Activated T-helper 1 cell treated with anti-CD3 and anti-CD28 coated beads, Interleukin-12 subunit alpha, Interleukin-12 subunit beta, Interleukin-2, Interleukin-4 antibody, amounts not matched to agents 30 ng/mL and 10 ng/mL and 1 ng/mL, durations not matched to agents 14 hours and 24 hours and 36 hours (primary cell): ENCODE measurements at regions of chr6 and their contacts with region 1.

Region 1: GRCh38 chr6:45922728-45923351 is 92.8 kb downstream of the CLIC5 start:
- DNase-seq: peak; percentile 55
- H3K4me3 Mint-ChIP-seq: peak overlapping the region; percentile 43
- H3K27ac Mint-ChIP-seq: peak overlapping the region; percentile 82
- H3K4me1 Mint-ChIP-seq: peaks cover 57% of the 10 kb centered on the region
- H3K27me3 Mint-ChIP-seq: peaks cover 4% of the 10 kb centered on the region

Region 2: DNA sequence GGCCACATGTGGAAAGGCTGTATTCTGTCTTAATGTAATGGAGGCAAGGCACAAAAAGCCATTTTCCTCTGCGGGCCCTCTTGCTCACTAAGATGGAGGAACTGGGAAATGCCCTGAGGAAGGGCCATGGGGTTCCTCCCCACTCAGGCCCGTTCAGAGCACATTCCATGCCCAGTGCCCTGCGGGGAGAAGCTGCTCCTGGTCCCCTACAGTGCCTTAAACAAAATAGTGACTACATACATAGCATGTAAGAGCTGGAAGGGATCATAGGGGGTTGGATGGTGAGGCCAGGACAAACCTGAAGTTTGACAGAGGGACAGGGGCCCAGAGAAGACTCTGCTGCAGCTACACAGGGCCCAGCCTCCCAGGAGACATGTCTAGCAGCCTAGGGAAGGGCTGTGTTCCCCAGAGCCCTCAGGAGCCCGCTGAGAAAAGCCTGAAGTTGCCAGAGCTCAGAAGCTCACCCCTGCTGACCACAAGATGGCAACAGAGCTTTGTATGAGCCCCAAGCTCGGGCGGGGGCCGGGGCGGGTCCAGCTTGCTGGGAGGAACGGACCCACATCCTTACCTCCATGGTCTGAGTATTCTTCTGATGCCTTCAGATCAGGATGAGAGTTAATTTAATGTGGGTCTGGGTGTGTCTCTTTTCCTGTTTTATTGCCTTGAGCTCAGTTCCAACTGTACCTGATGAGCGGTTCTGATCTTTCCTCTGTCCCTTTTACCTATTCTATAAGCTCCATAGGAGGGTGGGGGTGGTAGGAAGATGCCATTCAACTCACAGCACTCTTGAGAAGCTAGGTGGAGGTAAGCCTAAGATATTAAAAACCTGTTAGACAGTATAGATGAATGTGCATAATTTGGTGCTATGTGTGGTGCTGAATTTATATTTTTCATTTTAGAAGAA is 1292.5 kb before region 1 on chr6:
- intact Hi-C with region 1: loop called (anchors 1 kb)
- DNase-seq: no peak
- H3K4me3 Mint-ChIP-seq: no peak overlapping the region
- H3K27ac Mint-ChIP-seq: no peak overlapping the region
- H3K4me1 Mint-ChIP-seq: peaks cover 9% of the 10 kb centered on the region
- H3K27me3 Mint-ChIP-seq: peaks cover 6% of the 10 kb centered on the region

Region 3: DNA sequence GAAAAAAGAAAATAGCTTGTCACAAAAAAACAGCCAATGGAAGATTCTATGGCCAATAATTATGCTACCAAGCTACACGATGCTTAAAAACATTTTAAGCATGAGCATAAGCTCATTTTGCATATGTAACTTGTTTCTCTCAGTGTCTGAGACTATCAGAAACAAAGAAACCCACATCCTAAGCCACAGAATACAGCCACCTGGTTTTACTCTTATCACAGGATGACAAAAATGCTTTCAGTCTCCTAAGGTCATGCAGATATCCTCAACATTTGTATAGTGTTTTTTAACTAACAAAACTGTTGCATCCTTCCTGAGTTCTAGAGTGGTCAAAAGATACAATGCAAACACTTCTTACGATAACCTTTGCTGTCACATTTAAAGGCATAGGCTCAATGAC is 766.8 kb before region 1 on chr6:
- intact Hi-C with region 1: loop called (anchors 2 kb)
- DNase-seq: peak; percentile 47
- H3K4me3 Mint-ChIP-seq: no peak overlapping the region
- H3K27ac Mint-ChIP-seq: peak overlapping the region; percentile 53
- H3K4me1 Mint-ChIP-seq: peaks cover 56% of the 10 kb centered on the region
- H3K27me3 Mint-ChIP-seq: no peaks in the 10 kb centered on the region

Region 4: DNA sequence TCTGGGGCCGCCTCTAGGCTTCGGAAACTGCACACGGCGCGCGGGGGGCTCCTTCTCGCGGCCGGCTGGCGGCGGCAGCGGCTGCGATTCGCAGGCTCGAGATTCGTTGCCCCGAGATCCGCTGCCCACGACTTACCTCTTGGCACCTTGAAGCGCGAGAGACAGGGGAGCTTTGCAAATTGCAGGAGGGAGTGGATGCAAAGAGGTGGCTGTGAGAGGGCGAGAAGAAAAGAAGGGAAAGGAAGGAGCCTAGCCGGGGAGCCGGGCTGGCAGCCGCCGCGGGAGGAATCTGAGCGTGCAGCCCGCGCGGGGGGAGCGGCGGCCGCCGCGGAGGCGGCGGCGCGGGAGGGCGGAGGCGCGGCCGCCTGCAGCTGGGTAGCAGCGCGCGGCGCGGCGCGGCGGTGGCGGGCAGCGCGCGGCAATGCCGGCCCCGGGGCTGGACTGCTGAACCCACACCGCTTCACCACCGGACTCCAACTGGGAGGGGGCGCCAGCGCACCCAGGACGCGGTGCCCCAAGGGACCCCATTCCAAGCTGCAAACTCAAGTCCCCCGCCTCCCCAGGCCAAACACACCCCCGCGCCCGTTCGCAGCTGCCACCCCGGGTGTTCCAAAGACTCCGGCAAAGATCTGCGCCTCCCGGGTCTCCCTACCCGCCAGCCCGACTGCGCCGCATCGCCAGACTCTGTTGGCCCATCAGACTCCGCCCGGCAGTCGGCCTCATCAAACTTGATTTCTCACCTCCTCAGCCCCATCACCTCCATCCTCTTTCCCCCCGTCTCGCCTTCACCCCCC is 500.9 kb before region 1 on chr6:
- intact Hi-C with region 1: loop called (anchors 1 kb)
- DNase-seq: peak; percentile 37
- H3K4me3 Mint-ChIP-seq: peak overlapping the region; percentile 97
- H3K27ac Mint-ChIP-seq: peak overlapping the region; percentile 94
- H3K4me1 Mint-ChIP-seq: peaks cover 38% of the 10 kb centered on the region
- H3K27me3 Mint-ChIP-seq: peaks cover 26% of the 10 kb centered on the region

Region 5: DNA sequence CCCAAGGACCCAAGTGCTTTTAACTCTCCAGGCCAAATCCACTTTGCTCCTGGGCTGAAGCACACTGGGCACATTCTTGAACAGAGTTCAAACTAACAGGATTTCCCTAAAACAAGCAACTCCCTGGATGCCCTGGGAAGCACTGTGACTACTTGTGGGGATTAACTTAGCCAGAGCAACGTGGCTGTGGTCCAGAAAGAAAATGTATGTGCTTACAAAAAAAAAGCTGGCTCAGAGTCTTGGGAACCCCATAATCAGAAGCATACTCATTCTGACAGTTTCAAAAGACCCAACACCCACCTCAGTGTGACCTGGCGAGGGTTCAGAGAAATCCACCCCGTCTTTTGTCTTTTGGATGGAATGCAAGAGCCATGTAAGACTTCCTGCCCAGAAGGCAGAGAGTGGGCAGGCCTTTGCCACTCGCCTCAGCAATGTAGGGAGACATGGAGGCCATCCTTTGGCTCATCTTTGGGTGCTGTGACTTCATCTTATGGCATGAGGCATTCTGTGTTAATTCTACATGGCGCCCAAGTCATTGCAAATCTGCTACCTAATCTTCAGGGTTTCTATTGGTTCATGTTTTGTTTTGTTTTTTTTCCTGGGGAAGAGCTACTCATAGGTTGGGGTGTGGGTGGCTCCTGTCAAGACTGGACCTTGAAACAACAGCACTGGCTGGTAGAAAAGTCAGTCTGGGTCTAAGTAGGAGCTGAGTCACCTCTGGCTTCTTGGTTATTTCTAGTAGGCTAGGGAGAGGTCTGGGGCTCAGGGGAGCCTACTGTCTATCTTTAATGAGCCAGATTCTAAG is 296.6 kb before region 1 on chr6:
- intact Hi-C with region 1: loop called (anchors 2 kb)
- DNase-seq: no peak
- H3K4me3 Mint-ChIP-seq: no peak overlapping the region
- H3K27ac Mint-ChIP-seq: peak overlapping the region; percentile 41
- H3K4me1 Mint-ChIP-seq: peaks cover 36% of the 10 kb centered on the region
- H3K27me3 Mint-ChIP-seq: no peaks in the 10 kb centered on the region

Region 6: DNA sequence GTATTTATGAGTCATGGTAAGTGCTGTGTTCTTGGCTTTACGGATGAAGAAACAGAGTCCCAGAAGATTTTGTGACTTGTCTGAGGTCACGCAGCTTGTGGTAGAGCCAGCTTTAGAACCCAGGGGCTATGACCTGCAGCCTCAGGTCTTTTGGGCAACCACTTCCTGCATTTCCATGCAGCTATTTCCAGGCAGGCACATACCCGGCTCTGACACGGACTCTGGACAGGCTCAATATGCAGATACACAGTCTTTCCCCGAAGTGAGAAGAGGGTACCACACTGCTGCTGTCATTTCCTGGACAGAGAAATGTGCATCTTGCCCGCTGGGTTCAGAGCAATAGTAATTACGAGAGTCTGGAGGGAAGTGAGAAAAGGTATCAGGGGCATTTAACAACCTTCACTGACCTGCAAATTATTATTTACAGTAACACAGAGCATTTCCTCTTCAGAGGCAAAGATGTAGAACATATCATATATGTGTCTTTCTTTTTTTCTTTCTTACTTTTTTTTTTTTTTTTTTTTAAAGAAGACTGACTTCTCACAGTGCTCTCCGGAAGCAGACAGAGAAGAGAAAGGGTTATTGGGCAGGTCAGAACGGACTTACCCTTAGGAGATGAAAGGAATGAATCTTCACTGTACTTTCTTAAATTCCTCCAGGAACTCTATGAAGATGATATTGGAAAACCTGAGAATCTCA is 92.2 kb before region 1 on chr6:
- intact Hi-C with region 1: loop called (anchors 1 kb)
- DNase-seq: peak; percentile 44
- H3K4me3 Mint-ChIP-seq: peak overlapping the region; percentile 70
- H3K27ac Mint-ChIP-seq: peak overlapping the region; percentile 85
- H3K4me1 Mint-ChIP-seq: peaks cover 47% of the 10 kb centered on the region
- H3K27me3 Mint-ChIP-seq: no peaks in the 10 kb centered on the region